Activated T-helper 1 cell treated with anti-CD3 and anti-CD28 coated beads, Interleukin-12 subunit alpha, Interleukin-12 subunit beta, Interleukin-2, Interleukin-4 antibody, amounts not matched to agents 30 ng/mL and 10 ng/mL and 1 ng/mL, durations not matched to agents 14 hours and 24 hours and 36 hours (primary cell): ENCODE measurements at regions of chr5 and their contacts with region 1.

Region 1: DNA sequence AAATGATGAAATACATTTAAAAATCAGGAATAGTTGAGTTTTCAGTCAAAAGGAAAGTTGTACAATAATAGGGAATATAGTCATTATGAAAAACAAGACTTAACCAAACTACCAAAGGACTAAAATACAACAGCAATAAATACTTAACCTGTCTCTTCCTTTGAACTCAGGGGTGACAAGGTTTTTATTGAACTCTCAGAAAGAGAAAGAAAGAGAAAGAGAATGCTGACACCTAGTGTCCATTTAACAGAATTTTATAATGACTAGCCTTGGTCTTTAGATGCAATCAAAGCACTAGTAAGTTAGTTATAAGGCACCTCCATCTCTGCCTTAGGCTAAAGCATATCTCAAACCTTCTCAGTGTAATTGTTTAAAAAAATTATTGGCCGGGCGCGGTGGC is 47.5 kb downstream of the UIMC1 start:
- DNase-seq: no peak
- H3K4me3 Mint-ChIP-seq: no peak overlapping the region
- H3K27ac Mint-ChIP-seq: no peak overlapping the region
- H3K4me1 Mint-ChIP-seq: peaks cover 5% of the 10 kb centered on the region
- H3K27me3 Mint-ChIP-seq: no peaks in the 10 kb centered on the region

Region 2: GRCh38 chr5:176812269-176813259 is 146.5 kb before region 1 on chr5:
- intact Hi-C with region 1: loop called (anchors 2 kb)
- DNase-seq: no peak
- H3K4me3 Mint-ChIP-seq: no peak overlapping the region
- H3K27ac Mint-ChIP-seq: no peak overlapping the region
- H3K4me1 Mint-ChIP-seq: peaks cover 11% of the 10 kb centered on the region
- H3K27me3 Mint-ChIP-seq: peaks cover 51% of the 10 kb centered on the region

Region 3: GRCh38 chr5:176979669-176980068 is 20.6 kb after region 1 on chr5:
- intact Hi-C with region 1: no loop called
- DNase-seq: no peak
- H3K4me3 Mint-ChIP-seq: no peak overlapping the region
- H3K27ac Mint-ChIP-seq: no peak overlapping the region
- H3K4me1 Mint-ChIP-seq: no peaks in the 10 kb centered on the region
- H3K27me3 Mint-ChIP-seq: no peaks in the 10 kb centered on the region